ENCODE measurements at regions of chr7 and their contacts with region 1.

Region 1: GRCh38 chr7:137656227-137656849 is 190.4 kb downstream of the DGKI start:
- DNase-seq: peak; percentile 75
- H3K4me3 Mint-ChIP-seq: no peak overlapping the region
- H3K27ac Mint-ChIP-seq: no peak overlapping the region
- H3K4me1 Mint-ChIP-seq: no peaks in the 10 kb centered on the region
- H3K27me3 Mint-ChIP-seq: peaks cover 30% of the 10 kb centered on the region
- CTCF ChIP-seq: peak; percentile 71

Region 2: GRCh38 chr7:137717811-137718271 is 61.5 kb after region 1 on chr7:
- CTCF ChIA-PET with region 1: no interaction called
- intact Hi-C with region 1: no loop called
- DNase-seq: no peak
- H3K4me3 Mint-ChIP-seq: no peak overlapping the region
- H3K27ac Mint-ChIP-seq: no peak overlapping the region
- H3K4me1 Mint-ChIP-seq: no peaks in the 10 kb centered on the region
- H3K27me3 Mint-ChIP-seq: peaks cover 36% of the 10 kb centered on the region
- CTCF ChIP-seq: no peak

Region 3: GRCh38 chr7:138008547-138009349 is 352.4 kb after region 1 on chr7:
- CTCF ChIA-PET with region 1: no interaction called
- intact Hi-C with region 1: loop called (anchors 1 kb)
- DNase-seq: peak; percentile 40
- H3K4me3 Mint-ChIP-seq: no peak overlapping the region
- H3K27ac Mint-ChIP-seq: peak overlapping the region; percentile 54
- H3K4me1 Mint-ChIP-seq: peaks cover 9% of the 10 kb centered on the region
- H3K27me3 Mint-ChIP-seq: no peaks in the 10 kb centered on the region
- CTCF ChIP-seq: peak; percentile 73

Region 4: GRCh38 chr7:139362302-139362701 is 1706.0 kb after region 1 on chr7:
- CTCF ChIA-PET with region 1: no interaction called
- intact Hi-C with region 1: no loop called
- DNase-seq: no peak
- H3K4me3 Mint-ChIP-seq: peak overlapping the region; percentile 29
- H3K27ac Mint-ChIP-seq: no peak overlapping the region
- H3K4me1 Mint-ChIP-seq: peaks cover 22% of the 10 kb centered on the region
- H3K27me3 Mint-ChIP-seq: no peaks in the 10 kb centered on the region
- CTCF ChIP-seq: no peak